Ascending aorta (tissue), 2 donors: ENCODE measurements at regions of chr14 and their contacts with region 1.

Region 1: DNA sequence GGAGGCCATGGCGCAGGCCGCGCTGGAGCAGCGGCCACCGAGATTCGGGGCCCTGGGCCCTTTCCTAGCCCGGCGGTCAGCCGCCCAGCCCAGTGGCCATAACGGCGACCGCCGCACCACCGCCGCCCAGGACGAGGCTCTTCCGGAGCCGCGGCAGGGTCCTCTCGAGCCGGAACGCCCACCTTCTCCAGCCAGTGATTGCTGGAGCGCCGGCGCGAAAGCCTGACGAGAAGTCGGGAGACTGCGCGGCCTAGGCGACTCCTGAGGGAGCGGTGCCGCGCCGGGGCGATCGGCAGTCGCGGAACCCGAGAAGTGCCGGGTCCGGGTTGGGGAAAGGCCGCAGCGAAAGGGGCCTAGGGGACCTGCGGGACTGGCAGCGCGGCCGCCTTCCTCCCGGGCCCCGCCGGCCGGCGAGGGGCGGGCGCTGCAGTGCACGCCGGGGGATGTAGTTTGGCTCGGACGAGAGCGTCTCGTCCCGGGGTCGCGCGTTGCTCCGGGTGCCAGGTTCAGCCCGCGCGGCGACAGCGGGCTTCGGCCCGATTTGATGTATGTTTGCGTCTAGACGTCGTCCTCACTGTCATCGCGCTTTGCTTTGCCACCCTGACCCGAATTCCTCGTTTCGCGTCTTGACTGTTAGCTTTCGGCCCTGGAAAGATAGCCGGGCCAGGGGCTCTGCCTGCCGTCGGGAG is at the start of gene VTI1B:
- DNase-seq: peak in 1 of 2 donors; percentile 84
- H3K4me3 ChIP-seq: peak within 1 kb of the TSS; percentile 86 to 97
- H3K27ac ChIP-seq: peak within 1 kb of the TSS; percentile 96 to 100
- H3K4me1 ChIP-seq: peaks cover 3 to 25% of the 10 kb centered on the region in 2 donors
- H3K27me3 ChIP-seq: no peaks in the 10 kb centered on the region
- CTCF ChIP-seq: peak in 1 of 3 experiments; percentile 8
- total RNA-seq, gene VTI1B: 43.2 TPM

Region 2: GRCh38 chr14:67599698-67600561 is 74.7 kb before region 1 on chr14 and contains the start of gene PIGH:
- intact Hi-C with region 1: loop called (anchors 1 kb)
- DNase-seq: peak; percentile 56 to 95
- H3K4me3 ChIP-seq: peak within 1 kb of the TSS; percentile 84 to 90
- H3K27ac ChIP-seq: peak within 1 kb of the TSS; percentile 88 to 92
- H3K4me1 ChIP-seq: peaks cover 4 to 10% of the 10 kb centered on the region in 2 donors
- H3K27me3 ChIP-seq: no peaks in the 10 kb centered on the region
- CTCF ChIP-seq: peak; percentile 52 to 53 (median 52)
- total RNA-seq, gene PIGH: 20.9 TPM

Region 3: DNA sequence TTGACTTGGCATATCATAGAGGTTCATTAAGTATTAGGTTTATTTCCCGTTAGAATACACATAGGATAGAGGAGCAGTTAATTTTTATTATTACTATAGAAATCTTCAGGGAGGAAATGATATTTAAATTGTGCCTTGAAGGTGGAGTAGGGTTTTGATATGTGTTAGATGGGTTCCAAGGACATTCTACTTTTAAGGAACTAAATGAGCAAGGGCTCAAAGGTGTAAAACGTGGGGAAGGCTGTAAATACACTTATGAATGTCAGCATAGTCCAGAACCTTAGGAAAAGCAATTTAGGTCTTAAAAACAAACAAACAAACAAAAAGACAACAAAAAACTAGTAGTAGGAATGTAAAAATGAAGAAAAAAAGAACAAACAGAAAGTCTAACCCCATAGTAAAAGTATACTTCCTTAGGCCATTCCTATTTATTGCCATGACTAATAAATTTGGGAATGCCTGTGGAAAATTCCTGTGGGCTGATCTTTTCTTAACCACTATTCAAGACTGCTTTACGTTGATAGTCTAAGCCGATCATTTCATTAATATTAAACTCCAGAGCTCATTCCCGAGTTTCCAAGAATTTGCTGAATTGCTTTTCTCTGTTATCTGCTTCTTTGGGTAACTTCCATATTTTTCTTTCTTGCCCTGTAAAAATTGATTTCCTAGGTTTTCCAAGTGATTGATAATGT is 325.2 kb after region 1 on chr14:
- intact Hi-C with region 1: no loop called
- DNase-seq: no peak
- H3K4me3 ChIP-seq: peak overlapping the region in 1 of 2 donors; percentile 20
- H3K27ac ChIP-seq: peak overlapping the region in 1 of 2 donors; percentile 15
- H3K4me1 ChIP-seq: no peaks in the 10 kb centered on the region
- H3K27me3 ChIP-seq: no peaks in the 10 kb centered on the region
- CTCF ChIP-seq: no peak